Activated T-helper 2 cell treated with anti-CD3 and anti-CD28 coated beads, Interferon-gamma antibody, Interleukin-2, Interleukin-4, amounts not matched to agents 10 μg/mL and 5 μg/mL and 100 μg/mL, durations not matched to agents 14 hours and 24 hours and 36 hours (primary cell): ENCODE measurements at regions of chr6 and their contacts with region 1.

Region 1: DNA sequence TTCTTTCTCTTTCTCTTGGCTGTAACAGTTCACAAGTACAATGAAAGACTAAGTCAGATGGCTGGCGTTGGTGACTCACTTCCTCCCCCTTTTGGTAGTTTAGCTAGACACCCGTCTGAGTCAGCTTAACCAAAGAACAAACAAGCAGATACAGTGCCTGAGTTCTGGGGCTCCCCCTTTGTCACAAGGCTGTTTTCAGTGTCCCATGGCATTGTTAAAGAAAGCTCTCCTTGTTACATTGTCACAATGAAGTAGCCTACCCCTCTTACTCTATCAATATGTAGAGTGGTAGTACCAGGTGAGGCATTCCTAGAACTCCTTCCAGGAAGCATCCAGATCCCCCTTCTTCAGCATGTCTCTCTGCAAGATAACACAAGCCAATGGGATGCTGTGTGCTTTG is 38.6 kb downstream of the KIAA0408 start:
- DNase-seq: peak; percentile 74
- H3K4me3 Mint-ChIP-seq: no peak overlapping the region
- H3K27ac Mint-ChIP-seq: peak overlapping the region; percentile 60
- H3K4me1 Mint-ChIP-seq: peaks cover 16% of the 10 kb centered on the region
- H3K27me3 Mint-ChIP-seq: no peaks in the 10 kb centered on the region

Region 2: DNA sequence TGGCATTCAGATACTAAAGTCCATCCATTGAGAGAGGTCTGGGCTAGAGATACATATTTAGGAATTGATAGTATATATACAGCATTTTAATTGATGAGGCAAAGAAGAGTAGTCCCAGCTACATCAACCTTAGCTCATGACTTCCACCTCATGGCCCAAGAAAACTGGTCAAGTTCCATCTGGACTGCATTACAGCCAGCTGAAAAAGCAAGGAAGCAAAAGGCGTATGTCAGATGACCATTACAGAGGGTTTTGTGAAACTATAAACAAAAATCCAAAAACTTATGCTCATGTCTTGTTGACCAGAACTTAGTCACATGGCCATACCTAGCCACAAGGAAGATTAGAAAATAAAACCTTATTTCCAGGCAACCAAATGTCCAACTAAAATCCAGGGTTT is 200.7 kb before region 1 on chr6:
- intact Hi-C with region 1: no loop called
- DNase-seq: no peak
- H3K4me3 Mint-ChIP-seq: no peak overlapping the region
- H3K27ac Mint-ChIP-seq: no peak overlapping the region
- H3K4me1 Mint-ChIP-seq: no peaks in the 10 kb centered on the region
- H3K27me3 Mint-ChIP-seq: peaks cover 6% of the 10 kb centered on the region

Region 3: GRCh38 chr6:127291495-127291894 is 129.1 kb before region 1 on chr6:
- intact Hi-C with region 1: loop called (anchors 1 kb)
- DNase-seq: no peak
- H3K4me3 Mint-ChIP-seq: no peak overlapping the region
- H3K27ac Mint-ChIP-seq: peak overlapping the region; percentile 48
- H3K4me1 Mint-ChIP-seq: peaks cover 40% of the 10 kb centered on the region
- H3K27me3 Mint-ChIP-seq: no peaks in the 10 kb centered on the region

Region 4: GRCh38 chr6:127403636-127404035 is 16.9 kb before region 1 on chr6:
- intact Hi-C with region 1: no loop called
- DNase-seq: no peak
- H3K4me3 Mint-ChIP-seq: no peak overlapping the region
- H3K27ac Mint-ChIP-seq: peak overlapping the region; percentile 23
- H3K4me1 Mint-ChIP-seq: peaks cover 11% of the 10 kb centered on the region
- H3K27me3 Mint-ChIP-seq: no peaks in the 10 kb centered on the region

Region 5: GRCh38 chr6:127457456-127458064 is 37.0 kb after region 1 on chr6:
- intact Hi-C with region 1: loop called (anchors 1 kb)
- DNase-seq: no peak
- H3K4me3 Mint-ChIP-seq: no peak overlapping the region
- H3K27ac Mint-ChIP-seq: no peak overlapping the region
- H3K4me1 Mint-ChIP-seq: peaks cover 61% of the 10 kb centered on the region
- H3K27me3 Mint-ChIP-seq: peaks cover 1% of the 10 kb centered on the region

Region 6: GRCh38 chr6:127484212-127484858 is 63.8 kb after region 1 on chr6:
- intact Hi-C with region 1: loop called (anchors 1 kb)
- DNase-seq: no peak
- H3K4me3 Mint-ChIP-seq: peak overlapping the region; percentile 66
- H3K27ac Mint-ChIP-seq: peak overlapping the region; percentile 65
- H3K4me1 Mint-ChIP-seq: peaks cover 42% of the 10 kb centered on the region
- H3K27me3 Mint-ChIP-seq: no peaks in the 10 kb centered on the region